Mammary epithelial cell (primary cell): ENCODE measurements at regions of chr20 and their contacts with region 1.

Region 1: DNA sequence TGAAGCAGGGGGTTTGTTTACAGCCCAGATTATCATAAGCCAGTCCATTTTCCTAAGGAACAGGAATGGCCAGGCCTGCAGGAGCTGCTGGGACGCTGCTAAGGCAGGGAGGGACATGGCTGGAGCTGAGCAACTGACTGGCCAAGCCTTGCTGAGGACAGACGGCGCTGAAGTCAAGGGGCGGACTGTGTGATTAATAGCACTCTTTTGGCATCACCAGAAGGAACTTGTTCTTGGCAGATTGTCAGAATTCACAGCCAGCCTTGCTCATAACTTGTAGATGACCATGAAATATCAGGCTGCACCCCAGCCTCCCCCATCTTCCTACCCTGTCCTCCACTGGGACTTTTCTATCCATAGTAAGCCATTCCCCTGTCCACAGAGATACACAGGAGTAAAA is 218.8 kb upstream of the RNF24 start:
- DNase-seq: peak; percentile 45
- H3K4me3 ChIP-seq: no peak overlapping the region
- H3K27ac ChIP-seq: no peak overlapping the region
- H3K4me1 ChIP-seq: no peaks in the 10 kb centered on the region
- H3K27me3 ChIP-seq: no peaks in the 10 kb centered on the region
- CTCF ChIP-seq: no peak

Region 2: GRCh38 chr20:4306206-4306605 is 72.1 kb after region 1 on chr20:
- CTCF ChIA-PET with region 1: no interaction called
- dilution Hi-C with region 1: loop called (anchors 5 kb)
- in situ Hi-C with region 1: no loop called
- intact Hi-C with region 1: no loop called
- DNase-seq: no peak
- H3K4me3 ChIP-seq: no peak overlapping the region
- H3K27ac ChIP-seq: no peak overlapping the region
- H3K4me1 ChIP-seq: no peaks in the 10 kb centered on the region
- H3K27me3 ChIP-seq: no peaks in the 10 kb centered on the region
- CTCF ChIP-seq: no peak